Right cardiac atrium (tissue), 5 donors: ENCODE measurements at regions of chr16 and their contacts with region 1.

Region 1: DNA sequence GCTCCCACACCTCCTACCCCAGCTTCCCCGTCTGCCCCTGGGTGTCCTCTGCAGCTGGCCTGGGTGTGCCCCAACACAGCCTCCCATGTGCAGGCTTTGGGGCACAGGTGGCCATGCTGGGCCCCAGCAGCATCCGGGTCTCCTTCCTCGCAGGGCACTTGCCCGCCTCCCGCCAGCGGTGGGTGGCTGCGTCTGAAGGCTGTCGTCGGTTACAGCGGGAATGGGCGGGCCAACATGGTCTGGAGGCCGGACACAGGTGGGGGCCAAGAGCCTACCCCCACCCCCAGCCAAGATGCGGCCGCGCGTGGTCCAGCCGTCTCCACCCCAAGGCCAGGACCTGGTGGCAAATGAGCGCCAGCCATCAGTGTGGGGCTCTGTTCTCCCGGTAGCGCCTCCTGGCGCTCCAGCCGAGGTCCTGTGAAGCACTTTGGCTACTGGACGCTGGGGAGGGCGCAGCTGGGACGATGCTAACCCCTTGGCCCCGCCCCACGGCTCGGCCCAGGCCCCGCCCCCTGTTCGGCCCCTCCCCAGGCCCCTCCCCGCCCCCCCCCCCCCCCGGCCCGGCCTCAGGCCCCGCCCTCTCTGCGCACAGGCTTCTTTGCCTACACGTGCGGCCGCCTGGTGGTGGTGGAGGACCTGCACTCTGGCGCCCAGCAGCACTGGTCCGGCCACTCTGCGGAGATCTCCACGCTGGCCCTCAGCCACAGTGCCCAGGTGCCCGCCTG is 7.3 kb upstream of the RHOT2 start:
- DNase-seq: peak; percentile 88 to 96 (median 95)
- ATAC-seq: peak; percentile 78 to 85
- H3K4me3 ChIP-seq: no peak overlapping the region
- H3K27ac ChIP-seq: peak overlapping the region; percentile 39
- H3K4me1 ChIP-seq: no peaks in the 10 kb centered on the region
- H3K27me3 ChIP-seq: no peaks in the 10 kb centered on the region

Region 2: DNA sequence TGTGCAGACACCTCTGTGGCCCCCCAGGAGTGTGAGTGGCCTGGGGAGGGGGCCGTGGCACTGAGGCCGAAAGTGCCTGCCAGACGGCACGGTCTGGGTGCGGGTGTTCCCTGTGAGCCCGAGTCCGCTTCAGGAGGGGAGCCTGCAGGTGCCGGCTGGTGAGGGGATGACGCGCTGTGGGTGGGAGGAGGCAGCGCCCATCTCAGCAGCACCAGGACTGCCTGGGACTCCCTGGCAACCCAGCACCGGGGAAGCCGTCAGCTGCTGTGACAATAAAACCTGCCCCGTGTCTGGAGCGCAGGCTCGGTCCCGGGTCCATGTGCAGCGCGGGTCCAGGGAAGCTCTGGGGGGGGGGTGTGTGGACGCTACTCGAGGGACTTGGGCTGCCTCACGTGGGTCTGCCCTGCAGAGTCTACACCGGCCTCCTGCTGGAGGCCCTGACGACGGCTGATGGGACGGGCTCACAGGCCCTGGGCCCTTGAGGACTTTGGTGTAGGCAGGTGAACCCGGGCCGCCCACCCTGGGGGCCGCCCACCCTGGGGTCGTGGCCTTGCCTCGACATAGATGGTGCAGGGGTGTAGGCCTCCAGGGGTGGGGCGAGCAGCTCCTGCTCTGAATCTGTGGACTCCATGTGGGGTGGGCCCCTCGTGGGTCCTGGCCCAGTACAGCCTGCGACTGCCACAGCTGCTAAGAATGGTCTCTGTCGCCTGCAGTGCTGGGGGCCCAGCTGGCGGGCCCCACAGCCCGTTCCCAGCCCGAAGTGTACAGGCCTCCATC is 76.6 kb before region 1 on chr16:
- intact Hi-C with region 1: loop called in 3 of 4 experiments (anchors 5 to 10 kb)
- DNase-seq: peak; percentile 15 to 55 (median 50)
- ATAC-seq: no peak
- H3K4me3 ChIP-seq: no peak overlapping the region
- H3K27ac ChIP-seq: no peak overlapping the region
- H3K4me1 ChIP-seq: no peaks in the 10 kb centered on the region
- H3K27me3 ChIP-seq: no peaks in the 10 kb centered on the region

Region 3: DNA sequence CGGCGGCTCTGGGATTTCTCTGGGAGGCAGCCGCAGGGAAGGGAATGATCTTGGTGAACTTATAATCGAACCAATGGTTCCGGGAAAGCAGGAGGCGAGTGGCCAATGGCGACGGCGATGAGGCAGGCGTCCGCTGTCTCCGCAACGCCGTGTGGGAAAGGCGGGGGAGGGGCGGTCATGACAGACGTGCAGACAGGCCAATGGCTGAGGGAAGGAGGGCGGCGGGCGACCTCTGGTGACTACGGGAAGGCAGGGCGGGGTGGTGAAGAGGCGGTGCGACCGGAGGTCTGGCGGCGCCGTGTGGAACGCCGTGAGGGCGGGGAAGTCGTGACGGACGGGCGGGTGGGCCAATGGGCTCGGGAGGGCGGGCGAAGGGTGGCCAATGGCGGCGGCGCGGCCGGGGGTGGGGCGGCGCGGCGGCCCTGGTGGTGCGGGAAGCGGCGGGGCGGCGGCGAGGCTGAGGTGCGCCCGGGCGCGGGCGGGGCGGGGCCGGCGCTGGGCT is 70.9 kb before region 1 on chr16 and contains the start of gene RAB40C:
- intact Hi-C with region 1: loop called in 3 of 4 experiments (anchors 5 to 10 kb)
- DNase-seq: peak; percentile 99 to 100 (median 100)
- ATAC-seq: peak; percentile 95 to 96
- H3K4me3 ChIP-seq: peak within 1 kb of the TSS; percentile 73
- H3K27ac ChIP-seq: peak within 1 kb of the TSS; percentile 89
- H3K4me1 ChIP-seq: no peaks in the 10 kb centered on the region
- H3K27me3 ChIP-seq: no peaks in the 10 kb centered on the region
- total RNA-seq, gene RAB40C: 10.9 to 13.4 (median 11.9) TPM